ENCODE measurements at regions of chr3 and their contacts with region 1.

Region 1: GRCh38 chr3:49839193-49839809 is 17.1 kb downstream of the TRAIP start:
- DNase-seq: peak; percentile 74
- ATAC-seq: peak; percentile 96
- H3K4me3 ChIP-seq: no peak overlapping the region
- H3K27ac ChIP-seq: no peak overlapping the region
- H3K4me1 ChIP-seq: no peaks in the 10 kb centered on the region; the same call in 1 of the 2 replicates
- H3K27me3 ChIP-seq: no peaks in the 10 kb centered on the region
- CTCF ChIP-seq: peak; percentile 94
- POLR2A ChIP-seq: no peak
- RAD21 ChIP-seq: peak; percentile 89

Region 2: GRCh38 chr3:49076646-49077045 is 762.7 kb before region 1 on chr3:
- CTCF ChIA-PET with region 1: no interaction called
- POLR2A ChIA-PET with region 1: no interaction called
- dilution Hi-C with region 1: no loop called
- in situ Hi-C with region 1: no loop called
- intact Hi-C with region 1: no loop called
- DNase-seq: no peak
- ATAC-seq: no peak
- H3K4me3 ChIP-seq: no peak overlapping the region
- H3K27ac ChIP-seq: no peak overlapping the region
- H3K4me1 ChIP-seq: no peaks in the 10 kb centered on the region
- H3K27me3 ChIP-seq: no peaks in the 10 kb centered on the region
- CTCF ChIP-seq: no peak
- POLR2A ChIP-seq: no peak
- RAD21 ChIP-seq: no peak

Region 3: GRCh38 chr3:49703443-49703927 is 135.8 kb before region 1 on chr3:
- CTCF ChIA-PET with region 1: interaction called, 11 read pairs
- POLR2A ChIA-PET with region 1: no interaction called
- dilution Hi-C with region 1: no loop called
- in situ Hi-C with region 1: loop called (anchors 5 kb)
- intact Hi-C with region 1: loop called (anchors 1 kb)
- DNase-seq: peak; percentile 62
- ATAC-seq: peak; percentile 96
- H3K4me3 ChIP-seq: no peak overlapping the region
- H3K27ac ChIP-seq: no peak overlapping the region
- H3K4me1 ChIP-seq: no peaks in the 10 kb centered on the region
- H3K27me3 ChIP-seq: no peaks in the 10 kb centered on the region
- CTCF ChIP-seq: peak; percentile 88
- POLR2A ChIP-seq: no peak
- RAD21 ChIP-seq: peak; percentile 87

Region 4: DNA sequence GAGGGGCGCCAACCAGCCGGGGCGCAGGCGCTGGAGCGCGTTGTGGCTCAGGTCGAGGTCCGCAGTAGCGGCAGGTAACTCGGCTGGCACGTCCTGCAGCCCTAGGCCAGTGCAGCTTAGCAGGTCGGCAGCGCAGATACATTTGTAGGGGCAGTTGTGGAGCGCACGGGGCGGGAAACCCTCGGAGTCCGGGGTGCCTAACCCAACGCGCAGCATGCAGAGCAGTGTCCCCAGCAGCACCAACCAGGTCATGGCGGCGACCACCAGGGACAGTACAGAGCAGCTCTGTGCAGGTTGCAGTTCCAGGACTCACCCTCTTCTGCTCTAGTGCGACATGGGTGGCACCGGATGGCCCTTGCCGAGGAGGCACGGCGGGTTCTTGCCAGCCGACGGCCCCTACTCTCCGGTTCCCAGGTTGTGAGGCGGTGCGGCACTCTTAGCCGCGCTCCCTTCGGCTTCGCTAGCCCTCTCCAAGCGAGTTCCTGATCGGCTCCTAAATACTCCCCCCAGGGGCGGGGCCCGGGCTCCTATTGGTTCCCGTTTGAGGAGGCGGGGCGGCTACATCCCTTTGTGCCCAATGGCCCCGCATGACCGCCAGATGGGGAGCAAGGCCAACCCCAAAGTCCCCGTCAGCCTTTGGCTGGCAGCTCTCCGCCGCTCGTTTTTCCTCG is 120.0 kb before region 1 on chr3 and contains the start of gene AMIGO3:
- CTCF ChIA-PET with region 1: interaction called, 9 read pairs
- POLR2A ChIA-PET with region 1: interaction called, 4 read pairs
- dilution Hi-C with region 1: no loop called
- in situ Hi-C with region 1: no loop called
- intact Hi-C with region 1: loop called (anchors 1 kb)
- DNase-seq: peak; percentile 86
- ATAC-seq: peak; percentile 75
- H3K4me3 ChIP-seq: peak within 1 kb of the TSS; percentile 69
- H3K27ac ChIP-seq: no peak within 1 kb of the TSS; the same call in 1 of the 2 replicates
- H3K4me1 ChIP-seq: peaks cover 13% of the 10 kb centered on the region
- H3K27me3 ChIP-seq: no peaks in the 10 kb centered on the region
- CTCF ChIP-seq: peak; percentile 39
- POLR2A ChIP-seq: peak; percentile 53; the same call in 1 of the 2 replicates
- RAD21 ChIP-seq: peak; percentile 38
- total RNA-seq, gene AMIGO3: not detected in 2 replicates

Region 5: DNA sequence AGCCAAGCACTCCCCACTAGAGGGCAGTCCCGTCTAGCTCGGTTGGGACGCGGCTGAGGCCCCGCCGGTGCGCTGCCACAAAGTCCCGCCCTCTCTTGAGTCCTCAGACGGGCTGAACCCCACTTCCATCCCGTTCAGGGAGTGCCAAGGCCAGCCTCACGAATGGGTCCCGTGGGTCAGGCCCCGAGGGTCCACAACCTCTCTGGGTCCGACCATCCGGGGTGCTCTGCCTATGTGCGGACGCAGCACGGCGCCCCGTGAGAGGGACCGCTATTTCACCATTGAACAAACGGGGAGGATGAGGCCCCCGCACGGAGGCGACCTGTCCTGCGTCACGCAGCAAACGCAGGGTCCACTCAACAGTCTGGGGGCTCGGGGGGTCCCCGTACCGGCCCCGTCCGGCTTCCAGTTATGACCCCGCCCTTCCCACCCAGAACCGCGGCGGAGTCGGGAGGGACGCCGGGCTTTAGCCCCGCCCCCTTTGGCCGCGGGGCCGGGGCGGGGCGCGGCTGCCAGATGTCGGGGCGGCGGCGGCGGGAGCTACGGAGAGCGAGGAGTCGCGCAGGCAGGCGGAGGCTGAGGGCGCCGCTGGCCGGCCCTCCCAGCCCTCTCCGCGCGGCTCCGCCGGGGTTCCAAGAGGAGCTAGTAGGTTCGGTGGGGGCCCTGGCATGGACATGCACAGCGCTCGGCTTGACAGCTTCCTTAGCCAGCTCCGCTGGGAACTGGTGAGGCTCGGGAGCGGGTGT is 36.4 kb before region 1 on chr3 and contains the start of gene INKA1:
- CTCF ChIA-PET with region 1: interaction called, 33 read pairs
- POLR2A ChIA-PET with region 1: interaction called, 3 read pairs
- dilution Hi-C with region 1: no loop called
- in situ Hi-C with region 1: no loop called
- intact Hi-C with region 1: loop called (anchors 1 kb)
- DNase-seq: peak; percentile 72
- ATAC-seq: peak; percentile 85
- H3K4me3 ChIP-seq: peak within 1 kb of the TSS; percentile 79
- H3K27ac ChIP-seq: peak within 1 kb of the TSS; percentile 81
- H3K4me1 ChIP-seq: peaks cover 35% of the 10 kb centered on the region
- H3K27me3 ChIP-seq: no peaks in the 10 kb centered on the region
- CTCF ChIP-seq: peak; percentile 90
- POLR2A ChIP-seq: no peak
- RAD21 ChIP-seq: peak; percentile 93
- total RNA-seq, gene INKA1: 2.3 and 2.8 TPM in 2 replicates

Region 6: DNA sequence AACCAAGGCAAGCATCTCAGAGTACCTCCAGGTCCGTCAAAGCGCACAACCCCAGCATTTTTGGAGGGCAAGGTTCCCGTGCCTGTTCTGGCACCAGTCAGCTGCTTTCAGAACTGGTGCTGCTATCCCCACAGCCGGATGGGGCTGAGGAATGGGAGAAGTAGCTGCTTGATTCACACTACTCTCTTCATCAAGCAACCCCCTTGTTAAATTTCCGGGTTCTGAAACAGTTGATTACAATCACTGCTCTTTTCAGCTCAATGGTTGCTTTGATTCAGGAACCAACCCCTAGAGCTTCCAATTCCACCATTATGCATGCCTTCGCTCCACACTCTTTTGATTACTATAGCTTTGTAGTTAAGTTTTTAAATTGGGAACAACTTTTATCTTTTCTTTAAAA is 13.3 kb before region 1 on chr3:
- CTCF ChIA-PET with region 1: interaction called, 12 read pairs
- POLR2A ChIA-PET with region 1: no interaction called
- dilution Hi-C with region 1: no loop called
- in situ Hi-C with region 1: no loop called
- intact Hi-C with region 1: no loop called
- DNase-seq: no peak
- ATAC-seq: no peak
- H3K4me3 ChIP-seq: no peak overlapping the region
- H3K27ac ChIP-seq: no peak overlapping the region
- H3K4me1 ChIP-seq: no peaks in the 10 kb centered on the region
- H3K27me3 ChIP-seq: no peaks in the 10 kb centered on the region
- CTCF ChIP-seq: no peak
- POLR2A ChIP-seq: no peak
- RAD21 ChIP-seq: no peak

Region 7: DNA sequence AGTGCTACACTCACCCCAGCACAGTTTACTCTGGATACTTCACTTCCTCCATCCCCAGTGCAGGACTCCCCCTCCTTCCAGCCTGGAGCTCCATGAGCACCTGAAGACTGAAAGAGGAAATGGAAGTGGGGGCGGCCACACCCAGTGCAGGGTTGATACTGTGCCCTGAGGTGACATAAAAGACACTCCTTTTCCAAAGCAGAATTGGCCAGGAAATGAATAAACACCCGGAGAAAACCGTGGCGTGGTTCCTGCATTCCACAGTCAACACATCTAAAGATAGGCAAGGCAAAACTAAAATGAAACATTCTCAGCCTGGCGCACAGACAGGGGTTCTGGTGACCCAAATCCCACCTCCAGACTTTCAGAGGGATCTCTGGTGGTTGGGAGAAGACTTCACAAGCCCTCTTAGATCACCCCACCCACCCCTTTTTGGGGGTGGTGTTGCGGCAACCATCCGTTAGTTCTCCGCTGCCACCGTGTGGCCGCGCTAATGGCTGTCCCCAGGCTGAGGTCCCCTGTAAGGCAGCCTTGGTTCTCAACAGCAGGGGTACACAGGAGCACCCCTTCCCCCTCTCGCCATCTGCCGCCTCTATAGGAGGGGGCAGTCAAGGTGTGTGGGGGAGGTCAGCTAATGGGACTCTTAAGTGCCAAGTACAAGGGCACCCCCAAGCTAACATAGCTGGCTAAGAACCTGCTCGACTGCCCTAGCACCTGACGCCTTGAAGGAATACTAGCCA is 66.9 kb after region 1 on chr3:
- CTCF ChIA-PET with region 1: interaction called, 3 read pairs
- POLR2A ChIA-PET with region 1: no interaction called
- dilution Hi-C with region 1: no loop called
- in situ Hi-C with region 1: no loop called
- intact Hi-C with region 1: loop called (anchors 5 kb)
- DNase-seq: peak; percentile 46
- ATAC-seq: peak; percentile 88
- H3K4me3 ChIP-seq: peak overlapping the region; percentile 45; the same call in 1 of the 2 replicates
- H3K27ac ChIP-seq: no peak overlapping the region
- H3K4me1 ChIP-seq: peaks cover 6% of the 10 kb centered on the region
- H3K27me3 ChIP-seq: no peaks in the 10 kb centered on the region
- CTCF ChIP-seq: peak; percentile 66
- POLR2A ChIP-seq: no peak
- RAD21 ChIP-seq: peak; percentile 73

Measured in IMR-90 (cell line).